Activated CD8-positive, alpha-beta T cell treated with anti-CD3 and anti-CD28 coated beads for 36 hours (primary cell): ENCODE measurements at regions of chr4 and their contacts with region 1.

Region 1: GRCh38 chr4:109433205-109434006 is at the start of gene SEC24B:
- DNase-seq: peak; percentile 92
- ATAC-seq: peak; percentile 87
- H3K4me3 Mint-ChIP-seq: peak within 1 kb of the TSS; percentile 87
- H3K27ac Mint-ChIP-seq: peak within 1 kb of the TSS; percentile 92
- H3K4me1 Mint-ChIP-seq: peaks cover 53% of the 10 kb centered on the region
- H3K27me3 Mint-ChIP-seq: no peaks in the 10 kb centered on the region
- CTCF ChIP-seq: peak; percentile 92
- total RNA-seq, gene SEC24B: 25.8 to 26.0 TPM

Region 2: DNA sequence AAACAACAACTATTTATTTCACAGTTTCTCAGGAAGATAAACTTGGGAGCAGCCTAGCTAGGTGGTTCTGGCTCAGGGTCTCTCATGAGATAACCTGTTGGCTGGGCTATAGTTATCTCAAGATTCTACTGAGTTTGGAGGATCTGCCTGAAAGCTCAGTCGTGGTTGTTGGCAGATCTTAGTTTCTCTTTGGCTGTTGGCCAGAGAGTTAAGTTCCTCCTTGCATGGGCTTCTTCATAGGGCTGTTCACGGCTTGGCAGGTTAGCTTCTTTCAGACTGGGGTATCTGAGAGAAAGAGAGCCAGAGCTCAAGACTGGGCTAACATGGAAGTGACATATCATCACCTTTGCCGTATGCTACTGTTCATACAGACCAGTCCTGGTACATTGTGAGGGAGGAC is 28.9 kb after region 1 on chr4:
- CTCF ChIA-PET with region 1: interaction called, 13 read pairs
- POLR2A ChIA-PET with region 1: no interaction called
- intact Hi-C with region 1: no loop called
- DNase-seq: no peak
- ATAC-seq: no peak
- H3K4me3 Mint-ChIP-seq: no peak overlapping the region
- H3K27ac Mint-ChIP-seq: no peak overlapping the region
- H3K4me1 Mint-ChIP-seq: peaks cover 22% of the 10 kb centered on the region
- H3K27me3 Mint-ChIP-seq: no peaks in the 10 kb centered on the region
- CTCF ChIP-seq: no peak

Region 3: GRCh38 chr4:109574102-109574850 is 140.9 kb after region 1 on chr4:
- CTCF ChIA-PET with region 1: interaction called, 4 read pairs
- POLR2A ChIA-PET with region 1: no interaction called
- intact Hi-C with region 1: loop called (anchors 5 kb)
- DNase-seq: no peak
- ATAC-seq: peak; percentile 38
- H3K4me3 Mint-ChIP-seq: peak overlapping the region; percentile 46
- H3K27ac Mint-ChIP-seq: peak overlapping the region; percentile 77
- H3K4me1 Mint-ChIP-seq: peaks cover 64% of the 10 kb centered on the region
- H3K27me3 Mint-ChIP-seq: no peaks in the 10 kb centered on the region
- CTCF ChIP-seq: no peak

Region 4: GRCh38 chr4:109815151-109816081 is 382.0 kb after region 1 on chr4 and contains the start of gene GAR1:
- CTCF ChIA-PET with region 1: interaction called, 14 read pairs
- POLR2A ChIA-PET with region 1: no interaction called
- intact Hi-C with region 1: no loop called
- DNase-seq: peak; percentile 94
- ATAC-seq: peak; percentile 95
- H3K4me3 Mint-ChIP-seq: peak within 1 kb of the TSS; percentile 95
- H3K27ac Mint-ChIP-seq: peak within 1 kb of the TSS; percentile 98
- H3K4me1 Mint-ChIP-seq: peaks cover 44% of the 10 kb centered on the region
- H3K27me3 Mint-ChIP-seq: no peaks in the 10 kb centered on the region
- CTCF ChIP-seq: no peak
- total RNA-seq, gene GAR1: 36.4 to 42.1 TPM